ENCODE measurements at regions of chr19 and their contacts with region 1.

Region 1: DNA sequence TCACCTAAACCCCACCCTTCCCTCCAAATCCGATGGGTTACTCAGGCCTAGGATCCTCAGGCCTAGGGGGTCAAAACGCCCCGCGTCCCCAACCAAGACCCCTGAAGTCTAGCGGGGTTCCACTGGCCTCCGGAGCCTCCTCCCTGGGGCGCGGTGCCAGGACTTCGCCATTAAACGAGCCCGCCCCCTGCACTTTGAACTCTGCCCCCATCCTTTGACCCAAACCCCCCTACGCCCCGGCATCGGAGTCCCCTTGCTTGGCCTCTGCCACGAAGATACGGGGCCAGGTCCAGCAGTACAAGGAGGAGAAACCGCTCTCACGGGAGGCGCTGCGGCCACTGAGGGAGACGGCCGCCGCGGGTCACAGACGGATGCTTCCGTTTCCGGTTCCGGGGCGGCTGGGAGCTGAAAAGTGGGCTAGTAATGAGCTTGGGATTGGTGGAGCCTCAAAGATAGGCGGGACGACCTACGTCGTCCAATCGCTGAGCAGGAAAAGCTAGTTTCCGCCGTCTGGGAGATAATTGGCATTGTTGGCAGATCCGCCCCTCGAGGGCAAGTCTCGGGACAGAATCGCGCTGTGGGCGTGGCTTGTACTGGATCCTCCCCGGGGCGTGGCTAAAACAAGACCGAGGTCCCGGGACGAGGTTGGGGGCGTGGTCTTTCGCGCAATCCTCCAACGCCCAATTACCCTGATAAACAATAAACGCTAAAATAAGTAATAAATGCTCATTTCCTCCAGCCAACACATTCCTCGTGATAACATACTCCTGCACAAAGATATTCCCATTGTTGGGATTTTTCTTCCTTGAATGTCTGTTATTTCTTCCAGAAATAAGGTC is 5.7 kb upstream of the ZNF77 start:
- DNase-seq: peak; percentile 99
- ATAC-seq: peak; percentile 98
- H3K4me3 Mint-ChIP-seq: peak overlapping the region; percentile 91
- H3K27ac Mint-ChIP-seq: peak overlapping the region; percentile 93
- H3K4me1 Mint-ChIP-seq: peaks cover 24% of the 10 kb centered on the region
- H3K27me3 Mint-ChIP-seq: peaks cover 3% of the 10 kb centered on the region

Region 2: GRCh38 chr19:2887391-2887914 is 63.1 kb before region 1 on chr19:
- POLR2A ChIA-PET with region 1: interaction called, 11 read pairs
- DNase-seq: no peak
- ATAC-seq: peak; percentile 32
- H3K4me3 Mint-ChIP-seq: no peak overlapping the region
- H3K27ac Mint-ChIP-seq: no peak overlapping the region
- H3K4me1 Mint-ChIP-seq: peaks cover 7% of the 10 kb centered on the region
- H3K27me3 Mint-ChIP-seq: no peaks in the 10 kb centered on the region

Region 3: DNA sequence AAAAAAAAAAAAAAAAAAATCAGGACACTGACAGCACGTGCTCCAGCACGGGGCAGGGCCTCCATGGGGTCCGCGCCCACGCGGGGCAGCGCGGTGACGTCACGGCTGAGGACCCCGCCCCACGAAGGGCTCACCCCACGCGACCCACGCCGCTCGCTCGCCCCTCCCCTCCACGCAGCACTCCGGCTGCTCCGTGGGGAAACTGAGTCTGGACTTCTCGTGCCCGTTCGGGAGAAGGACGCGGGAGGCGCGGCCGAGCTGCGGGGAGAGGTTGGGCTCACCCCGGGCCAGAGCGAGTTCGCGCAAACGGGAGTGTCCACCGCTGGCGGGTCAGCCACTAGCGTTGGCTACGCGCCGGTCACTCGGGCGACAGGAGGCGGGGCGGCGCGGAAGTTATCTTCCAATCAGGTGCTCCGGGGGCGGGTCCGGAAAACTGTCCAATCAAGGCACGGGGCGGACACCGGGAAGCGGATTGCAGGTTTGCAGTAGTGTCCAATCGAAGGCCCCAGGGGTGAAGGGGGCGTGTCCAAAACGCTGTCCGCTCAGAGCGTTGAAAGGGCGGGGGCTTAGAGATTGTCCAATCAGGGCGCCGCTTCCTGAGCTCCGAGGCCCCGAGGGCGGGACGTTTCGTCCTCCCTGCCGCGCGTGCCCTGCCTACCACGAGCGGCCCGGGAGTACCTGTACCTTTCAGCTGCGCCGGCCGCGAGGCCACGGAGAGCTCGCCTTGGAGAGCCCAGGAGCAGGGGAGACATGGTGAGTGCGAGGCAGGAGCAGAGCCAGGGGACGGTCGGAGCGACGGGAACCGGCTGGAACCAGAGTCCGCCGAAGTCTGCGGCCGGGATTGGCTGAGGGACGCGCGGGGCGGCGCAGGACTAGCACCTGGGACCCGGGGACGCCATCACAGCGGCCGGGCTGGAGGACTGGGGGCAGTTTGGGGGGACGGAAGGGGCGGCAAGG is 49.9 kb before region 1 on chr19 and contains the start of gene ZNF57:
- POLR2A ChIA-PET with region 1: interaction called, 14 read pairs
- DNase-seq: peak; percentile 93
- ATAC-seq: peak; percentile 98
- H3K4me3 Mint-ChIP-seq: peak within 1 kb of the TSS; percentile 98
- H3K27ac Mint-ChIP-seq: peak within 1 kb of the TSS; percentile 95
- H3K4me1 Mint-ChIP-seq: peaks cover 10% of the 10 kb centered on the region
- H3K27me3 Mint-ChIP-seq: no peaks in the 10 kb centered on the region
- total RNA-seq, gene ZNF57: 4.7 to 5.7 TPM

Region 4: GRCh38 chr19:2962045-2962561 is 11.6 kb after region 1 on chr19:
- POLR2A ChIA-PET with region 1: no interaction called
- DNase-seq: no peak
- ATAC-seq: peak; percentile 33
- H3K4me3 Mint-ChIP-seq: peak overlapping the region; percentile 22
- H3K27ac Mint-ChIP-seq: no peak overlapping the region
- H3K4me1 Mint-ChIP-seq: peaks cover 5% of the 10 kb centered on the region
- H3K27me3 Mint-ChIP-seq: no peaks in the 10 kb centered on the region

Region 5: GRCh38 chr19:2977001-2977685 is 26.6 kb after region 1 on chr19 and contains the start of gene TLE6:
- POLR2A ChIA-PET with region 1: interaction called, 10 read pairs
- DNase-seq: peak; percentile 94
- ATAC-seq: peak; percentile 100
- H3K4me3 Mint-ChIP-seq: peak within 1 kb of the TSS; percentile 99
- H3K27ac Mint-ChIP-seq: peak within 1 kb of the TSS; percentile 96
- H3K4me1 Mint-ChIP-seq: peaks cover 16% of the 10 kb centered on the region
- H3K27me3 Mint-ChIP-seq: peaks cover 19% of the 10 kb centered on the region
- total RNA-seq, gene TLE6: 4.4 to 5.4 TPM